ENCODE measurements at regions of chr17 and their contacts with region 1.

Region 1: GRCh38 chr17:41665566-41666236 is 23.0 kb upstream of the EIF1 start:
- DNase-seq: peak; percentile 95
- ATAC-seq: peak; percentile 96

Region 2: GRCh38 chr17:40803617-40804082 is 862.1 kb before region 1 on chr17:
- intact Hi-C with region 1: loop called (anchors 2 kb)
- DNase-seq: peak; percentile 87
- ATAC-seq: peak; percentile 81

Region 3: DNA sequence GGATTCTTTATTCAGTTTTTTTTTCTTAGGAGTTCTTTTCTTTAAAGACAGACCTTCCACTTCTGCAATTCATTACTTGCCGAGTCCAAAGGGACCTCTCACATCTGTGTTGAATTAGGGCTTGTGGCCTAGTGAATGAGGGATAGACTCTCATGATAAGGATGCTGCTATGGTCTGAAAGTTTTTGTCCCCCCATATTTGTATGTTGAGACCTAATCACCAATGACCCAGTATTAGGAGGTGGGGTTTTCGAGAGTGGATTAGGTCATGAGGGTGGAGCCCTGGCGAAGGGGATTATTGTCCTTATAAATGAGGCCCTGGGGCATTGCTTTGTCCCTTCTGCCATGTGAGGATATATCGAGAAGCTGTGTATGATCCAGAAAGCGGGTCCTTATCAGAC is 808.2 kb before region 1 on chr17:
- intact Hi-C with region 1: loop called (anchors 5 kb)
- DNase-seq: no peak
- ATAC-seq: peak; percentile 67

Region 4: GRCh38 chr17:40909351-40909750 is 756.4 kb before region 1 on chr17:
- intact Hi-C with region 1: loop called (anchors 2 kb)
- DNase-seq: peak; percentile 82
- ATAC-seq: peak; percentile 90

Region 5: GRCh38 chr17:41548844-41549595 is 116.7 kb before region 1 on chr17:
- intact Hi-C with region 1: loop called (anchors 1 kb)
- DNase-seq: peak; percentile 92
- ATAC-seq: peak; percentile 85

Region 6: DNA sequence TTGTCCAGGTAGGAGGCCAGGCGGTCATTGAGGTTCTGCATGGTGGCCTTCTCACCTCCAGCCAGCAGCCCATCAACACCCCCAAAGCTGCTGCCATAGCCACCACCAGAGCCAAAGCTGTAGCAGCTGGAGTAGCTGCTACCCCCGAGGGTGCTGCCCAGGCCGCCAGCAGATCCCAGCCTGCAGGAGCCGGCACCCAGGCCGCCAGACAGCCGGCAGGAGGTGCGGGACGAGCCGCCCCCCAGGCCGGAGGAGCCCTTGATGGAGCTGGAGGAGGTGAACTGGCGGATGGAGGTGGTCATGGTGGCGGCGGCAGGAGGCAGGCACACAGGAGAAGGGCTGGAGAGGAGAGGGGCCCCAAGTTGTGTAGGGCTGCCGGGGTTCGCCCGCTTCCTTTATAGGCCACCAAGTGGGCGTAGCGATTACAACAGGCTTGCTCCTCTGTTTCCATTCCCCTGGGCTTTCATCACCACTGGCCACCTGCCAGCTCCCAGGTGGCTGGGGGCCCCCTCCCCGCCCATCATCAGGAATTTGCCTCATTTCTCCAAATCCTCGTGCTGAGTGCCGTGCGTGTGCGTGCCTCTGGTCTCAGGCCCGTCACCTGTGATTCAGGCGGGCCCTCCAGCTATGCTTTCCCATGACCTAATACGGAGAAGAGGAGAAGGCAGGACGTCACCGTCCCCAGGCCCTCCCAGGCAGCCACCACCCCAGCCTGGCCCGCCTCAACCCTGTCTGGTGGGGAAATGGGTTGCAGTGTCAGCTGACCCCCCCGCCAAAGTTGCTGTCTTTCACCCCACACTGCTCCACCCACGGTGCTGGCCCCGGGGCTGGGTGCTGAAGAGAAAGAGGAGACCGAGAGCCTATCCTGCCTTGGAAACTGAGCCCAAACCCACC is 41.2 kb before region 1 on chr17 and contains the start of gene KRT17:
- intact Hi-C with region 1: no loop called
- DNase-seq: no peak
- ATAC-seq: no peak
- total RNA-seq, gene KRT17: not detected

Measured in Right ventricle myocardium inferior (tissue), 1 donor.